H1 (cell line): ENCODE measurements at regions of chr22 and their contacts with region 1.

Region 1: GRCh38 chr22:46563381-46564083 is 26.1 kb upstream of the CELSR1 start:
- DNase-seq: peak in 1 of 2 experiments; percentile 91
- H3K4me3 ChIP-seq: 0 out of 8 replicates have a peak overlapping the region, but pooled peaks of 1 of the 4 experiments have one; percentile 18
- H3K27ac ChIP-seq: peak overlapping the region; percentile 26; the same call in 1 of the 2 replicates
- H3K4me1 ChIP-seq: peaks cover 0 to 11% (median 7%) of the 10 kb centered on the region in 4 experiments; a peak in 6 of 7 replicates
- H3K27me3 ChIP-seq: no peaks in the 10 kb centered on the region
- CTCF ChIP-seq: peak; percentile 71 to 94 (median 86)
- EP300 ChIP-seq: no peak
- POLR2A ChIP-seq: peak in 1 of 2 experiments; percentile 22; a peak in 1 of 3 replicates
- RAD21 ChIP-seq: peak; percentile 68 to 74

Region 2: GRCh38 chr22:46547883-46548244 is 15.7 kb before region 1 on chr22:
- CTCF ChIA-PET with region 1: interaction called, 33 read pairs
- POLR2A ChIA-PET with region 1: interaction called, 9 read pairs
- DNase-seq: no peak
- H3K4me3 ChIP-seq: no peak overlapping the region
- H3K27ac ChIP-seq: no peak overlapping the region
- H3K4me1 ChIP-seq: no peaks in the 10 kb centered on the region; a peak in 1 of 7 replicates
- H3K27me3 ChIP-seq: no peaks in the 10 kb centered on the region
- CTCF ChIP-seq: no peak
- EP300 ChIP-seq: no peak
- POLR2A ChIP-seq: no peak
- RAD21 ChIP-seq: no peak

Region 3: DNA sequence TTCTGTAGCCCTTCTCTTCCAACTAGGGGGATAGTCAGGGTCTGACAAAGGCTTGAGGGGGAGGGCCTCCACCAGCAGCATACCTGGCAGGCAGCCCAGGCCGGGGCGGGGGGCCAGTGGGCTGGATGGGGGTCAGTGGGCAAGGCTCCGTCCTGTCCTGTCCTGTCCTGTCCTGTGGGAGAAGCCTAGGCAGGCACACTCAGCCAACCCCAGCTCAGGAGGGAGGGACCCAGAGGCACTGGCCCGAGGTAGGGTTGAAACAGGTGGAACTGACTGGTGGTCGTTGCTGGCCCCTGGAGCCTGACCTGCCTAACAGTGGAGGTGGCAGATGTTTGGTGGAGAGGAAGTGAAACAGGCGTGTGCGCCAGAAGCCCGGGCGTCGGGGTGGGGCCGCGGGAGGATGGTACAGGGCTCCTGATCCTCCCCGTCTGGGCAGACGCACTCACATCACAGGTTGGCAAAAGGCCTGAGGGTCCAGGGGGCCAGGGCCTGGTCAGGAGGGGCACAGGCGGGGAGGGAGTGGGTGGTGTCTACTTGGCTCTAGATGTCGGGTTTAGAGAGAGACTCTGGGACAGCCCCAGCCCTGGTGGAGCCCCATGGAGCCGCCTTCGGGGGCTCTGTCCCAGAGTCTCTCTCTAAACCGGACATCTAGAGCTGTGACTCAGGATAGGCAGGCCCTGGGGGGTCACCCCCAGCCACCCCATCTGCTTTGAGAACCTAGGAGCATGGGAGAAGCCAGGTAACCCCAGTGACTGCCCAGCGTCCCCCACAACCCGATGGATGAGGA is 24.2 kb after region 1 on chr22:
- CTCF ChIA-PET with region 1: interaction called, 10 read pairs
- POLR2A ChIA-PET with region 1: interaction called, 3 read pairs
- DNase-seq: no peak
- H3K4me3 ChIP-seq: no peak overlapping the region
- H3K27ac ChIP-seq: no peak overlapping the region
- H3K4me1 ChIP-seq: peaks cover 0 to 30% (median 18%) of the 10 kb centered on the region in 4 experiments; a peak in 6 of 7 replicates
- H3K27me3 ChIP-seq: no peaks in the 10 kb centered on the region
- CTCF ChIP-seq: no peak
- EP300 ChIP-seq: no peak
- POLR2A ChIP-seq: no peak
- RAD21 ChIP-seq: no peak

Region 4: DNA sequence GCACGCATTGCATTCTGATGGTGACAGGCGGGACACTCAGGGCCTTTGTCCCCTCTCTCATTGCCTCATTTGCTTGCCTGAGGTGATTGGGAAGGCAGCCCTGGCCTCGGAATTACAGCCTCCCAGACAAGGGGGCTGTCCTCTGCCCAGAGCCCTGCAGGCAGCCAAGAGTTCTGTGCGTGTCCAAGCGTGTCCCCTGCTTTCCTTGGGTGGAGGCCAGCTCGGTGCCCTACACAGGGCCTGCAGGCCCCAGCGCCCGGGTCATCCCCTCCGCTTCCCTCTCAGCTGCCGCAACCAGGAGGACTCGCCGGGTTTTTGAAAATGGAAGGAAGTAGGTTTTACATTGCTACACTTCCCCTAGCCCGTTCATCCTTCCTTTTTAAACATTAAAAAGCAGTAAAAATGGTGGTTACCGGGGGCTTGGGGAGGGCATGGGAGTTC is 58.6 kb after region 1 on chr22:
- CTCF ChIA-PET with region 1: interaction called, 13 read pairs
- POLR2A ChIA-PET with region 1: interaction called, 3 read pairs
- DNase-seq: peak in 1 of 2 experiments; percentile 42
- H3K4me3 ChIP-seq: no peak overlapping the region
- H3K27ac ChIP-seq: no peak overlapping the region
- H3K4me1 ChIP-seq: peaks cover 0 to 10% (median 7%) of the 10 kb centered on the region in 4 experiments; a peak in 5 of 7 replicates
- H3K27me3 ChIP-seq: no peaks in the 10 kb centered on the region
- CTCF ChIP-seq: no peak
- EP300 ChIP-seq: no peak
- POLR2A ChIP-seq: no peak
- RAD21 ChIP-seq: no peak

Region 5: GRCh38 chr22:46661221-46661851 is 97.8 kb after region 1 on chr22:
- CTCF ChIA-PET with region 1: interaction called, 11 read pairs
- POLR2A ChIA-PET with region 1: no interaction called
- DNase-seq: no peak
- H3K4me3 ChIP-seq: no peak overlapping the region
- H3K27ac ChIP-seq: no peak overlapping the region
- H3K4me1 ChIP-seq: peaks cover 0 to 2% (median 0%) of the 10 kb centered on the region in 4 experiments; a peak in 1 of 7 replicates
- H3K27me3 ChIP-seq: no peaks in the 10 kb centered on the region
- CTCF ChIP-seq: no peak
- EP300 ChIP-seq: no peak
- POLR2A ChIP-seq: no peak
- RAD21 ChIP-seq: no peak

Region 6: GRCh38 chr22:46681010-46681409 is 117.5 kb after region 1 on chr22:
- CTCF ChIA-PET with region 1: interaction called, 32 read pairs
- POLR2A ChIA-PET with region 1: interaction called, 4 read pairs
- DNase-seq: peak in 1 of 2 experiments; percentile 70
- H3K4me3 ChIP-seq: no peak overlapping the region
- H3K27ac ChIP-seq: no peak overlapping the region
- H3K4me1 ChIP-seq: no peaks in the 10 kb centered on the region
- H3K27me3 ChIP-seq: no peaks in the 10 kb centered on the region
- CTCF ChIP-seq: peak; percentile 66 to 78 (median 67)
- EP300 ChIP-seq: no peak
- POLR2A ChIP-seq: no peak
- RAD21 ChIP-seq: peak; percentile 44 to 64